Heart right ventricle (tissue), 16 donors: ENCODE measurements at regions of chr15 and their contacts with region 1.

Region 1: DNA sequence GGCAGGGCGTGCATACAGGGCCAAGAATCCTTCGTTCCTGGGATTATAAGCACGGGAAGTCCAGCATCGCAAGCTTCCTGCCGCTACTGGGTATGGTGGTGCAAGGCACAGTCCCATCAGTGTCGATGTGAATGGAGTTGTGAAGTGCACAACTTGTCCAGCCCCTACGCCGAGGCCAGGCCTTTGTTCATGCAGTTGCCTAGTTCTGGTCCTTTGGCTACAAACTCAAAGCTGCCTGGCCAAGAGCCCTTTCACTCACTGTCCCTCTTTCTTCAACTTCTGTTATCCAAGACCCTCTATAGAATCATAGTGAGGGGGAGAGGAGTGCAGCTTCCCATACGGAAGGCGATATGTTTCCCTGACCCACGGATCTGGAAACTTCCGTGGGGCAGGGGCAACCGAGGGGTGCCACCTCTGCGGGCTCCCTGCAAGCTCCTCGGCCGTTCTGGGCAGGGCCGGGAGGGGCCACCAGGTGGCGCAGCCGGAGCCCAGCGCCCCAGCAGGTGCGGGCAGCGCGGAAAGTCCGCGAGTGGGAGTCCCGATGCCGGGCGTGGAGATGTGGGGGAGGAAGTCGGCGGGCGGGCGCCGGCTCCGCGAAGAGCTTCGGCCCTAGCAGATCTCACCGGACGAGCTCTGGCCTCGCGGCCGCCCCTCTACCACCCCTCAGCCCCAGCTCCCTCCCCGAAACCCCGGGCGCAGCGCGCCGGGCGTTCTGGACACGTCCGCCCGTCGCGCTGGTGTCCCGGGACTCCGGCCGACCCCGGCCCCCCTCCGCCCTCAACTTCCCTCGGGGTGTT is 693 bp downstream of the RASGRP1 start:
- DNase-seq: peak; percentile 40 to 72
- ATAC-seq: peak; percentile 85 to 95 (median 89)
- H3K4me3 ChIP-seq: peak overlapping the region; percentile 38 to 71 (median 58)
- H3K27ac ChIP-seq: peak overlapping the region in 1 of 10 donors; percentile 90
- H3K4me1 ChIP-seq: peaks cover 0 to 28% (median 12%) of the 10 kb centered on the region in 9 donors
- H3K27me3 ChIP-seq: peaks cover 0 to 43% (median 36%) of the 10 kb centered on the region in 7 donors
- CTCF ChIP-seq: peak; percentile 69 to 95 (median 87)

Region 2: GRCh38 chr15:38474155-38474757 is 89.7 kb before region 1 on chr15:
- intact Hi-C with region 1: loop called in 2 of 10 experiments (anchors 10 kb)
- DNase-seq: peak in 1 of 2 donors; percentile 11
- ATAC-seq: peak; percentile 79 to 93 (median 84)
- H3K4me3 ChIP-seq: no peak overlapping the region
- H3K27ac ChIP-seq: no peak overlapping the region
- H3K4me1 ChIP-seq: peaks cover 0 to under 1% (median 0%) of the 10 kb centered on the region in 9 donors
- H3K27me3 ChIP-seq: no peaks in the 10 kb centered on the region
- CTCF ChIP-seq: peak; percentile 16 to 71 (median 65)

Region 3: DNA sequence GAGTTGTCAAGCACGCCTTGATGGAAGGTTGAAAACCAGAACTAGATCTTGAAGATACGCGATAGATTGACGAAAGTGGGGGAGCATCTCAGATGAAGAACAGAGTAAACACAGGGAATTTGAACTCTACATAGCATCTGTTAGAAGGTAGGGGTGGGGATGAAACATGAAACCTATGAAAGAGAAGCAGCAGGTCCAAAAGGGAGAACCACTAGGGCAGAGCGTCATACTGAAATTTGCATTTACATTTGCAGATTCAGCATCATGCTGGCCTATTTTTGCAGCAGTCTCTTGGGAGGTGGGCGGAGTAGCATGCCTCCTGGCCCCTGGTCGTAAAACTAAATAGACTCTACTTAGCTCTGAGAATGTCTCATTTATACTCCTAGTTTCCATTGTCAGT is 46.8 kb after region 1 on chr15:
- intact Hi-C with region 1: no loop called
- DNase-seq: no peak
- ATAC-seq: no peak
- H3K4me3 ChIP-seq: no peak overlapping the region
- H3K27ac ChIP-seq: no peak overlapping the region
- H3K4me1 ChIP-seq: peaks cover 0 to 3% (median 0%) of the 10 kb centered on the region in 9 donors
- H3K27me3 ChIP-seq: peaks cover 0 to 8% (median 0%) of the 10 kb centered on the region in 7 donors
- CTCF ChIP-seq: no peak

Region 4: GRCh38 chr15:38631126-38632075 is 67.5 kb after region 1 on chr15:
- intact Hi-C with region 1: loop called in 6 of 10 experiments (anchors 2 to 10 kb)
- DNase-seq: no peak
- ATAC-seq: no peak
- H3K4me3 ChIP-seq: no peak overlapping the region
- H3K27ac ChIP-seq: no peak overlapping the region
- H3K4me1 ChIP-seq: peaks cover 0 to 11% (median 6%) of the 10 kb centered on the region in 9 donors
- H3K27me3 ChIP-seq: peaks cover 0 to 8% (median 0%) of the 10 kb centered on the region in 7 donors
- CTCF ChIP-seq: no peak

Region 5: DNA sequence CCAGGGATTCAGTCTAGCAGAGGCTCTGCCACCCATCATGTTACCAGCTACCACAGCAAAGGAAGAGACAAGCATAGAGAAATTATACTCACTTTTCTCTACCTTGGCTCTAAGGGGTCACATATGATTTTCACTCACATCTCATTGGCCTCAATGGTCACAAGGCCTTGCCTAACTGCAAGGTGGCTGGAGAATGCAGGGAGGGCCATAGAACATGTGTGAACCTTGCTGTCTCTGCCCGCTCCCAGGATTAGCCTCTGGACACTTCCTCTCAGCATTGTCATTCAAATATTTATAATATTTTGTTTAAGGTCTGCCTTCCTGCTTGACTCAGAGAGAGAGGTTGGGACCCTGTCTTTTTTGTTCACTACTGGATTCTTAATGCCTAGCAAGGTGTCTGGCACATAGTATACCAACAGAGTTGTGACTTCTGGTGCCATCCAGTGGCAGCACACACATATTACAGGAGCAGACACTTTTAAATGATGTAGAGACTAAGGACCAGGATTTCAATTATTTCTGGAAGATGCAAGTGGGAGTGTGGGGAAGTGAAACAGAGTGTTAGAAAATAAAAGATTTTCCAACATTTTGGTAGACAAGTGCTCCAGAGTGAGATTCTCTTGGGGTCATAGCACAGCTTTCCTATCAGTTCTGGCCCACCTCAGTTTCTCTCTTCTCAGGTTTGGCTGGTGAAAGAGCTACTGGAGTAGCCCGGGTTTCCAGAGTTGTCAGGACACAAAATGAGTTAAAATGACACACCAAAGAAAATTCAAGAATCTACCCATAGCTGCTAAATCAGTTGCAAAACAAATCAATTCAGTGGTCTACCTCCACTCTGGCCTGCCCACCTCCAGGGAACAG is 119.7 kb after region 1 on chr15:
- intact Hi-C with region 1: loop called (anchors 1 to 10 kb)
- DNase-seq: peak; percentile 18 to 42
- ATAC-seq: peak in 7 of 8 donors; percentile 56 to 81 (median 69)
- H3K4me3 ChIP-seq: no peak overlapping the region
- H3K27ac ChIP-seq: peak overlapping the region in 1 of 10 donors; percentile 66
- H3K4me1 ChIP-seq: peaks cover 0 to 28% (median 0%) of the 10 kb centered on the region in 9 donors
- H3K27me3 ChIP-seq: peaks cover 0 to 7% (median 0%) of the 10 kb centered on the region in 7 donors
- CTCF ChIP-seq: peak; percentile 52 to 81 (median 74)

Region 6: DNA sequence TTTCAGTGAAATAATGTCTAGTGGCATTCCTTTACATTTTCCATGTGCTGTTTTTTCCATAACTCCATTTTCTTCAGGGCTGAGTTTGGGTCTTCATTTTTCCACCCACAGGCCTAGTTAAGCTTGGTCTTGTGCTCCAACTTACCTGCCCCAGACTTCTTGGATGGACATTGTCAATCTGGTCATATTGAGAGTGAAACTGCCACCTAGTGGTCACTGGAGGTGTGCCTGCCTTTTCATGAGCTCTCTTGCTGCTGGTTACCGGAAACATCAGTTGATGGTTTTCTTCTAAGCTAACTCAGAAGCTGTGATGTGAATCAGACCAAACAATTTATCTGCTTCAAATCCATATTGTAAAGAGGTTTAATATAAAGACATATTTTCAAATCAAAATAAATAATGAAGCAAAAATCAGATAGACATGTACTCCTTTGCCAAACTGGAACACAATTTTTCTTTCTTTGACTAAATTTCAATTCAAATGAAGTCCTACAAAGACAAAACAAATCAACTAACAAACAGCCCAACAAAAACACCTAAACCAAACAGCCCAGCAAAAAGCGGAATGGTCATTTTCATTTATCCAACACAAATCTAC is 135.8 kb after region 1 on chr15:
- intact Hi-C with region 1: loop called in 1 of 10 experiments (anchors 5 kb)
- DNase-seq: peak; percentile 11 to 55
- ATAC-seq: peak in 3 of 8 donors; percentile 40 to 50 (median 49)
- H3K4me3 ChIP-seq: no peak overlapping the region
- H3K27ac ChIP-seq: no peak overlapping the region
- H3K4me1 ChIP-seq: peaks cover 0 to 10% (median 0%) of the 10 kb centered on the region in 9 donors
- H3K27me3 ChIP-seq: peaks cover 0 to 15% (median 0%) of the 10 kb centered on the region in 7 donors
- CTCF ChIP-seq: peak; percentile 59 to 93 (median 81)